ENCODE measurements at regions of chr5 and their contacts with region 1.

Region 1: GRCh38 chr5:91383027-91383955 is at the start of gene ARRDC3:
- DNase-seq: peak; percentile 87
- H3K4me3 ChIP-seq: peak within 1 kb of the TSS; percentile 64
- H3K27me3 ChIP-seq: no peaks in the 10 kb centered on the region
- CTCF ChIP-seq: no peak
- polyA plus RNA-seq, gene ARRDC3: 20.7 and 37.4 TPM in 2 replicates

Region 2: DNA sequence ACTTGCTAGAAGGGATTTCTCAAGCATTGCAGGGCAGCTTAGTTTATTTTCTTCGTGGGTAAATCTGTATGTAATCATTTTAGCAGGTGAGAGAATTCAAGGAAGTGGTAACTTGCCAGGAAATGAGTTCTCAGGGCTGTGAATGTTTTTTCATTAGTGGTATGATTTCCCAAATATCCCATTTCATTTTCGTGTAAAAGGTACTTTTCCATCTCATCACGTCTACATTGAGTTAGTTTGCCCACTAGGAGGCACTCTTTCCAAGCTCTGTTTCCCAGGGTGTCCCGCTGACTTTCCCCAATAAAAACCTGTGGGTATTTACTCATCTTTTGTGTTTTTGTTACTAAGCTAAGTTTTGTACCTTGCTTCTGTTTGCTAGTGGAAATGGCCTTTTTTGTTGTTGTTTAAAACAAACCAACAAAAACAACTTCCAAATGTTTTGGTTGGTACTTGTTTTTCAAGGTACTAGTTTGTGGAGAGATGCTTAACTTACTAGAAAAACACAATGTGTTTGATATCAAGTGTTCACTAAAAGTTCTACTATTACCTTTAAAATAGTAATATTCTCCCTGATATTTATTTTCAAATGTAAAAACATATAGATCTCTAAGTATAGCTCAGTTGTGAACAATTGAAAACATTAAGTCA is 451.1 kb before region 1 on chr5:
- CTCF ChIA-PET with region 1: interaction called, 106 read pairs
- POLR2A ChIA-PET with region 1: interaction called, 4 read pairs
- DNase-seq: no peak
- H3K4me3 ChIP-seq: no peak overlapping the region
- H3K27me3 ChIP-seq: no peaks in the 10 kb centered on the region
- CTCF ChIP-seq: peak; percentile 84

Region 3: DNA sequence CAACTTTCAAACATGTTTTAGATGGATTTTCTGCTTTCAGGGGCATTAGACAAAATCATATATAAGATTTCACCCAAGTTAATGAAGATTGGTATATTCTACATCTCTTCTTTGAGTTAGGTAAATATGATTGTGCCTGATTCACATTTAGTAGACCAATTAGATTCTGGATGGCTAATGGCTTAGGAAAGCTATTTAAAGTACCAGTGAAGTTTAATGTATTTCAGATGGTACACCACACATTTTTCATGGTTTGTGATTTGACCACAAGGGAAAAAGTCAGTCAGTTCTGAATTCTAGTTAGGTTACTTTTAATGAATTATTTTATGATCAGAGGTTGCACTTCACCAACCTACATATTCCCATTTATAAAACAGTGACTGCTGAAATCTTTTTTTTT is 415.0 kb before region 1 on chr5:
- CTCF ChIA-PET with region 1: no interaction called
- POLR2A ChIA-PET with region 1: no interaction called
- DNase-seq: no peak
- H3K4me3 ChIP-seq: no peak overlapping the region
- H3K27me3 ChIP-seq: no peaks in the 10 kb centered on the region
- CTCF ChIP-seq: no peak

Region 4: GRCh38 chr5:91110686-91111085 is 272.6 kb before region 1 on chr5:
- CTCF ChIA-PET with region 1: interaction called, 29 read pairs
- POLR2A ChIA-PET with region 1: no interaction called
- DNase-seq: peak; percentile 77
- H3K4me3 ChIP-seq: no peak overlapping the region
- H3K27me3 ChIP-seq: no peaks in the 10 kb centered on the region; the same call in 1 of the 2 replicates
- CTCF ChIP-seq: no peak

Region 5: DNA sequence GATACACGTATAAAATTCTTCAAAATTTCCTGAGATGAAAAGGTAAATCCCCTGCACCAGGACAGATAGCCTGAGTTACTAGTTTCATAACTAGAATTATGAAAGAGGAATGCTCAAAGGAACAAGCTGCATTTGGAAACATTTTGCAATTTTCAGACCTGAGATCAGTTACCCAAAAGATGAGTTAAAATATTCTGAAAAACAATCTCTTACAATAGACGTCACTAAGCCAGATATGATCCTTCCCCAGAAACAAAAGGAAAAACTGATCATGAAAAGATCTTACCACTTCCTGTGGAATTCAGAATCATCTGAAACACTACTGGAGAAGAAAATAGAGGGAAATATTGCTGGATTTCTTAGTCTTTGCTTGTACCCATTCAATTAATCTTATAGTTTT is 204.8 kb before region 1 on chr5:
- CTCF ChIA-PET with region 1: interaction called, 12 read pairs
- POLR2A ChIA-PET with region 1: interaction called, 3 read pairs
- DNase-seq: no peak
- H3K4me3 ChIP-seq: no peak overlapping the region
- H3K27me3 ChIP-seq: no peaks in the 10 kb centered on the region
- CTCF ChIP-seq: no peak

Region 6: DNA sequence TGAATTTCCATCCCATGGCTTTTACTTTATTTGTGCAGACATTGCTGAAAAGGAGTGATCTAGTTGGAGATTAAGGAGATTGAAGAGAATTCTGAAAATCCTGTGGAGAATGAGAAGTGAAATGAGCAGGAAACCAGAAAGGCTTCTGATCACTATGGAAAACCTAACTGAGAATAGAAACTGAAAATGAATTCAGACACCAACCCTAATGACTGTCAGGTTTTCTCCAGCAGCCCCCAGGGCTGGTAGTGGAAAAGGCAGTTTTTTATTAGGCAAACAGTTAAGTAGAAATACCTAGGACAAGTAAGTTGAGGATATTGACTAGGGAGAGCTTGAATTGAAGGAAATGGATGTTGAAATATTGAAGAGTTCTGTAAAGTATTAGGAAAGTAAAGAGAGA is 14.5 kb after region 1 on chr5:
- CTCF ChIA-PET with region 1: interaction called, 11 read pairs
- POLR2A ChIA-PET with region 1: no interaction called
- DNase-seq: no peak
- H3K4me3 ChIP-seq: no peak overlapping the region
- H3K27me3 ChIP-seq: no peaks in the 10 kb centered on the region
- CTCF ChIP-seq: no peak

Measured in BJ (cell line).